Activated T-helper 2 cell treated with anti-CD3 and anti-CD28 coated beads, Interferon-gamma antibody, Interleukin-2, Interleukin-4, amounts not matched to agents 10 μg/mL and 5 μg/mL and 100 μg/mL, durations not matched to agents 14 hours and 24 hours and 36 hours (primary cell): ENCODE measurements at regions of chr19 and their contacts with region 1.

Region 1: GRCh38 chr19:57947208-57948134 is at the start of gene ZNF256:
- DNase-seq: peak; percentile 80
- H3K4me3 Mint-ChIP-seq: peak within 1 kb of the TSS; percentile 90
- H3K27ac Mint-ChIP-seq: peak within 1 kb of the TSS; percentile 82
- H3K4me1 Mint-ChIP-seq: peaks cover 11% of the 10 kb centered on the region
- H3K27me3 Mint-ChIP-seq: no peaks in the 10 kb centered on the region
- total RNA-seq, gene ZNF256: 2.7 and 3.0 TPM in 2 replicates

Region 2: DNA sequence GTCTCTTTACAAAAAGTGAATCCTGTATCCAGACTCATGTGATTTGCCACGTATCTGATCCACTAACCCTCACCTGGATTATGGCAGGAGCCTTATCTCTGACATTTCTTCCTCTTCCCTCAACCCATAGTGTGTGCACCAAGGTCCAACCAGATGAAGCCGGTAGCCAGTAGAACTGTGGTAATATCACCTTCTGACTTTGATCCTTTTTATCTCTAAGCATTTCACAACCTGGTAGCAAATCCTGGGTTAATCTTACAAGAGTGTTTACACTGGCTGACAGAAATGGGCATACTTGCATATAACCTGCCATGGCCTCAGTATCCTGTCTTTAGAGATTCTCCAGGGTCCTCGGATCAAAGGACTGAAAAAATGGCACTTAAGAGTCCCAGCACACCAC is 32.9 kb before region 1 on chr19:
- intact Hi-C with region 1: loop called (anchors 1 kb)
- DNase-seq: no peak
- H3K4me3 Mint-ChIP-seq: peak overlapping the region; percentile 94
- H3K27ac Mint-ChIP-seq: no peak overlapping the region
- H3K4me1 Mint-ChIP-seq: peaks cover 21% of the 10 kb centered on the region
- H3K27me3 Mint-ChIP-seq: no peaks in the 10 kb centered on the region

Region 3: DNA sequence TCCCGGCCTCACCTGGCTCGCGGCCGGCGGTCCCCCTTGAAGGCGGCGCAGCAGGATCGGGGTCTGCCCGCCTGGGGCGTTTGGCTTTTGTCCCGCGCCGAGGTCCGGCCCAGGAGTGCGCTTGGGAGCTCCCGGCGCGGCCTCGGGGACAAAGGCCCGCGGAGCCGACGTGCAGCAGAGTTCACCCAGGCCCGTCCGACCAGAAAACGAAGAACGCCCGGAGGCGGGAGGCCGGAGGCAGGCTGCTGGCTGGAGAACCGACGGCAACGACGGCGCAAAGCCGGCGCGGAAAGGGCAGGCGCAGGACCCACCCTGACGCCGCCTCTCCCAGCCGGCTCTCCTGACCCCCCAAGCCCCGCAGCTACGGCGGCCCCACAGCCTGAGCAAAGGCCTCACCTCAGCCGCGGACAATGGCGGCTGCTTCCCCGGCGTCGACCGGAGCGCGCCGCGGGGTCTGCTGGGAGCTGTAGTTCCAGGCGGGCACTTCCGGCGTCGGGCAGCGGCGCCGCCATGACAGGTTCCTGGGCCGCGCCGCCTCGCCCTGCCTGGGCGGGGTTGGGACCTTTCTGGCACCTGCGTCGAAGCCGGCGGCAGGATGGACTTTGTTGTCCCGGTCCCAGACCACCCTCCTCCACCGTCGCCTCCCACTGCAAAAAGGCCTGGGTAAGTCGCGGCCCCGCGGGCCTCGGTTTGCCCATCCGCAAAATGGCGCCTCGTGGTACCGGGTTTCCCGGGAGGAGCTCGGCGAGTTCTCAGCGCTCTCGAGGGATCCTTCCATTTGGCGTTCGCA is 55.1 kb after region 1 on chr19 and contains the start of gene ZNF606:
- intact Hi-C with region 1: loop called (anchors 1 kb)
- DNase-seq: peak; percentile 80
- H3K4me3 Mint-ChIP-seq: peak within 1 kb of the TSS; percentile 80
- H3K27ac Mint-ChIP-seq: peak within 1 kb of the TSS; percentile 73
- H3K4me1 Mint-ChIP-seq: peaks cover 12% of the 10 kb centered on the region
- H3K27me3 Mint-ChIP-seq: no peaks in the 10 kb centered on the region
- total RNA-seq, gene ZNF606: 6.3 and 6.4 TPM in 2 replicates